ENCODE measurements at regions of chr1 and their contacts with region 1.

Region 1: DNA sequence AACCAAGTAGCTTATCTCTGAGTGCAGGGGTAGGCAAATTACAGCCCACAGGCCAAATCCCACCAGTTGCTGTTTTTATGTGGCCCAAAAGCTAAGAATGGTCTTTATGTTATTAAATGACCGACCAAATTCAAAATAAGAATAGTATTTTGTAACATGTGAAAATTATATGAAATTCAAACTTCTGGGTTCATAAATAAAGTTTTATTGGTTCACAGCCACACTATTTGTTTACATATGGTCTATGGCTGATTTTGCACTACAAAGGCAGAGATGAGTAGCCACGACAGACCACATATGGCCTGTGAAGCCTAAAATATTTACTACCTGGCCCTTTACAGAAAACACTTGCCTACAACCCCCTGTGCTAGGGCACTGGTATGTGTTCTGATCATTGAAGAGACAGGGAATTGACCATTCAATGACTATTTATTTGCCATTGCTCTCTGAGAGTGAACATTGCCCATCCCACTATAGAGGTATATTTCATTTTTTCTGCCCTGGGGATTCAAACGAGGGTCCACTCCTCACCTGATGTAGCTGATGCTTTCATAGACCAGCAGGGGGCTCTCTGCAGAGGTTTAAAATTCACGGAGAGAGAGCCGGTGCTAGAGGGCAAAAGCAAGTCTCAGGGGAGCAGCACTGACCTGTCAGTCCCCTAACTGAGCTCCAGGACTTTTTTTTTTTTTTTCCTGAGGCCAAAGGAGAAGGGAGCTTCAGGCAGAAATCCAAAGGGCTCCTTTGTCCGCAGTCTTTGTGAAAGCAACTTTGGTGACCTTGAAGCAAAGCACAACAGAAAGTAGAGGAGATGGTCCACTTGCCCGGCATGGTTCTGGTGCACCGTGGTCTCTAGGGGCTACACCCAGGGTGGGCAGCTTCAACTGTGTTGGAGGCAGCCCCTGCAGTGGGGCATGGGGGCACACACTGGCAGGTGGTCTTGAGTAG is 7.3 kb upstream of the GNL2 start:
- H3K4me3 ChIP-seq: no peak overlapping the region
- H3K27ac ChIP-seq: no peak overlapping the region
- H3K4me1 ChIP-seq: peaks cover 2% of the 10 kb centered on the region; the same call in 1 of the 2 replicates
- CTCF ChIP-seq: peak; percentile 35

Region 2: GRCh38 chr1:37622131-37622530 is 19.1 kb after region 1 on chr1:
- CTCF ChIA-PET with region 1: interaction called, 13 read pairs
- POLR2A ChIA-PET with region 1: interaction called, 3 read pairs
- H3K4me3 ChIP-seq: no peak overlapping the region
- H3K27ac ChIP-seq: no peak overlapping the region
- H3K4me1 ChIP-seq: no peaks in the 10 kb centered on the region
- CTCF ChIP-seq: no peak; the same call in 1 of the 2 replicates

Region 3: GRCh38 chr1:37641059-37641458 is 38.0 kb after region 1 on chr1:
- CTCF ChIA-PET with region 1: interaction called, 13 read pairs
- POLR2A ChIA-PET with region 1: no interaction called
- H3K4me3 ChIP-seq: no peak overlapping the region
- H3K27ac ChIP-seq: no peak overlapping the region
- H3K4me1 ChIP-seq: no peaks in the 10 kb centered on the region
- CTCF ChIP-seq: no peak

Region 4: GRCh38 chr1:37650173-37650572 is 47.2 kb after region 1 on chr1:
- CTCF ChIA-PET with region 1: interaction called, 10 read pairs
- POLR2A ChIA-PET with region 1: no interaction called
- H3K4me3 ChIP-seq: no peak overlapping the region
- H3K27ac ChIP-seq: no peak overlapping the region
- H3K4me1 ChIP-seq: no peaks in the 10 kb centered on the region
- CTCF ChIP-seq: no peak

Region 5: DNA sequence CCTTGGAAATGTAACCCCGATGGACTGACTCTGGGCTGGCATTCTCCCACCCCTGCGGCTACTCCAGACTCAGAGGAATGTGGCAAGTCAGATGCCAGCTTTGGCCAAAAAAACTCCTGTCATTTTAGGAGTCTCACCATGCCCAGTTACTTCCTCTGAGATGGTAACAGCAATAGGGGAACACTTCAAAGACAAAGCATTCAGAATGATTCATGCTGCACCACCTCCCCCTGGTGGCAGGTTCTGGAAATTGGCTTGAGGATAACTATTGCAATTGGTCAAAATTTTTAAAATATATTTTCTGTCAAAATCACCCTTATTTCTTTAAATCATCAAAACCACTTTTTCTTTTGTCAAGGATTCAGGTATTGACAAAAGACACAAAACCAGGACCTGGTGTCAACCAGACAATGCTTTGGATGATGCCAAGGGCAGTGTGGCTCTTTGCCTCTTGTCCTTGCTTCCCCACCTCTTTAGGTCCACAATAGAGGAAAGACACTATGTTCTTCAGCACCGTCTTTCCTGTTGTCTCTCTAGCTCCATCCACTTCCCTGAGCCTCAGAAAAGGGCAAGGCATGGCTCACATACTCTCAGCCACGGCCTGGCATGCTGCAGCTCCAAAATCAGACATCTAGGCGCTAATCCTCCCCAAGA is 79.4 kb after region 1 on chr1:
- CTCF ChIA-PET with region 1: interaction called, 183 read pairs
- POLR2A ChIA-PET with region 1: no interaction called
- H3K4me3 ChIP-seq: no peak overlapping the region
- H3K27ac ChIP-seq: no peak overlapping the region
- H3K4me1 ChIP-seq: no peaks in the 10 kb centered on the region
- CTCF ChIP-seq: peak; percentile 52; the same call in 1 of the 2 replicates

Region 6: GRCh38 chr1:37692078-37692833 is 89.2 kb after region 1 on chr1 and contains the start of gene CDCA8:
- CTCF ChIA-PET with region 1: interaction called, 11 read pairs
- POLR2A ChIA-PET with region 1: interaction called, 6 read pairs
- H3K4me3 ChIP-seq: peak within 1 kb of the TSS; percentile 96
- H3K27ac ChIP-seq: peak within 1 kb of the TSS; percentile 77
- H3K4me1 ChIP-seq: peaks cover 6% of the 10 kb centered on the region; the same call in 1 of the 2 replicates
- CTCF ChIP-seq: peak; percentile 93

Region 7: GRCh38 chr1:37859507-37860345 is 256.7 kb after region 1 on chr1 and contains the start of gene MTF1:
- CTCF ChIA-PET with region 1: interaction called, 10 read pairs
- POLR2A ChIA-PET with region 1: no interaction called
- H3K4me3 ChIP-seq: peak within 1 kb of the TSS; percentile 100
- H3K27ac ChIP-seq: peak within 1 kb of the TSS; percentile 47; the same call in 1 of the 2 replicates
- H3K4me1 ChIP-seq: no peaks in the 10 kb centered on the region
- CTCF ChIP-seq: peak; percentile 93